T-cell (primary cell): ENCODE measurements at regions of chr6 and their contacts with region 1.

Region 1: GRCh38 chr6:1524040-1524480 is 85.7 kb upstream of the FOXC1 start:
- DNase-seq: peak; percentile 38 to 86 (median 62)
- ATAC-seq: peak; percentile 66 to 85 (median 72)
- H3K4me3 ChIP-seq: peak overlapping the region; percentile 20 to 33
- H3K4me3 Mint-ChIP-seq: peak overlapping the region; percentile 69 to 79 (median 75)
- H3K27ac ChIP-seq: peak overlapping the region; percentile 26
- H3K27ac Mint-ChIP-seq: peak overlapping the region; percentile 55 to 71
- H3K4me1 ChIP-seq: peaks cover 6 to 53% of the 10 kb centered on the region in 2 experiments
- H3K4me1 Mint-ChIP-seq: peaks cover 44 to 53% (median 48%) of the 10 kb centered on the region in 3 donors
- H3K27me3 ChIP-seq: peaks cover 0 to 16% of the 10 kb centered on the region in 2 experiments
- H3K27me3 Mint-ChIP-seq: peaks cover 4 to 13% of the 10 kb centered on the region in 2 donors

Region 2: GRCh38 chr6:1552296-1552761 is 28.3 kb after region 1 on chr6:
- CTCF ChIA-PET with region 1: interaction called, 8 to 26 read pairs
- POLR2A ChIA-PET with region 1: interaction called, 3 to 4 read pairs
- DNase-seq: peak in 1 of 35 experiments; percentile 45
- ATAC-seq: peak in 1 of 4 experiments; percentile 52
- H3K4me3 ChIP-seq: no peak overlapping the region
- H3K4me3 Mint-ChIP-seq: no peak overlapping the region
- H3K27ac ChIP-seq: no peak overlapping the region
- H3K27ac Mint-ChIP-seq: no peak overlapping the region
- H3K4me1 ChIP-seq: peaks cover 0 to 16% of the 10 kb centered on the region in 2 experiments
- H3K4me1 Mint-ChIP-seq: peaks cover 11 to 31% (median 25%) of the 10 kb centered on the region in 3 donors
- H3K27me3 ChIP-seq: peaks cover 0 to 12% of the 10 kb centered on the region in 2 experiments
- H3K27me3 Mint-ChIP-seq: peaks cover 0 to 23% of the 10 kb centered on the region in 2 donors

Region 3: DNA sequence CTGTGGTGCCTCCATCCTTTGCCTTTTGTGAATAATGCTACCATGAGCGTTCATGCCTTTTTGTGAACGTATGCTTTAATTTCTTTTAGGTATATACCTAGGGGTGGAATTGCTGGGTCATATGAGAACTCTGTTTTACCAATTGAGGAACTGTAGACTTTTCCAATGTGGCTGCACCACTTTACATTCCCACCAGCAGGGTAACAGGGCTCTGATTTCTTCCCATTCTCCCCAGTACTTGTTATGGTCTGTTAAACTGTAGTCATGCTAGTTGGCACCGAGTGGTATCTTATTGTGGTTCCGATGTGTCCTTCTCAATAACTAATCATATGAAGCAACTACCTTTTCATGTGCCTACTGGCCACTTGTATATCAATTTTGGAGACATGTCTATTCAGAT is 409.2 kb after region 1 on chr6:
- CTCF ChIA-PET with region 1: no interaction called
- POLR2A ChIA-PET with region 1: no interaction called
- DNase-seq: no peak
- ATAC-seq: no peak
- H3K4me3 ChIP-seq: no peak overlapping the region
- H3K4me3 Mint-ChIP-seq: no peak overlapping the region
- H3K27ac ChIP-seq: no peak overlapping the region
- H3K27ac Mint-ChIP-seq: no peak overlapping the region
- H3K4me1 ChIP-seq: no peaks in the 10 kb centered on the region
- H3K4me1 Mint-ChIP-seq: no peaks in the 10 kb centered on the region
- H3K27me3 ChIP-seq: no peaks in the 10 kb centered on the region
- H3K27me3 Mint-ChIP-seq: no peaks in the 10 kb centered on the region